Mammary epithelial cell (primary cell): ENCODE measurements at regions of chrX and their contacts with region 1.

Region 1: GRCh38 chrX:108070891-108071290 is 20.5 kb downstream of the PSMD10 start:
- DNase-seq: peak; percentile 89
- H3K4me3 ChIP-seq: no peak overlapping the region
- H3K27ac ChIP-seq: peak overlapping the region; percentile 39
- H3K4me1 ChIP-seq: peaks cover 24% of the 10 kb centered on the region
- H3K27me3 ChIP-seq: no peaks in the 10 kb centered on the region
- CTCF ChIP-seq: no peak

Region 2: DNA sequence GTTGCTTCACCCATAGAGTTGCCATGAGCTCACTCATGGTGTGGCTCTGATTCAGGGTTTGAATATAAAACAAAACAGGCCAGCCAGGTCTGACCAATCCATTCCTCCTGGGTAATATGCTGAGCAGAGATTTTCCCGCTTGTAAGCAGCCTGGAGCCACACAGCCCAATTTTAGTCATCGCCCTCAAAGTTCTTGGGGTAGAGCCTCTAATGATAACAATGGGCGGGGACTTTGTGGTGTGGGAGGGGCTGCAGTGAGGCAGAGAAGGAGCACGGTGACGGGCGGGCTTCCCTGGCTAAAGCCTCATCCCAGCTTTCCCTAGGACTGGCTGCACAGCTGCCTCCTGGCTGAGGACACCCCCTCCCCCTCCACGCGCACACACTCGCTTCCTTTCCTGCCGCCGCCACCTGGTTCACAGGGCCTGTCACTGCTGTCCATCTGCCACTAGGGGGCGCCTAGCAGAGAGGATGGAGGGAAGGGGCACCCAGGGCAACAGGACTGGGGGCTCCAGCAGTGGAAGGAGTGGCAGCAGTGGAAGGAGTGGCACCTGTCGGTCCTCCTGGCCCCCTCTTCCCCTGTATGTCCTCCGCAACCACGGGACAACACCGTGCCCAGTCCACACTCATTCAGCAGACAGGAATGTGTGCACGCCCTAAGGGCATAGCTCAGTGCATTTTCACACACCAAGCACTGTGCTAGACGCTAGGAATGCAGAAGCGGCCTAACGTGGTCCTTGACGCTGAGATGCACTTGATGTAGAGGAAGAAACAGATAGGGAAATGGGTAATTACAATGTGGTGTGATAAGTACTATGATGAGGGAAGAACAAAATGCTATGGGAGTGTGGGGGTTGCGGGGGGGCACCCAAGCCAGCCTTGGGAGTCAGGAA is 415.8 kb before region 1 on chrX:
- CTCF ChIA-PET with region 1: interaction called, 9 read pairs
- dilution Hi-C with region 1: no loop called
- in situ Hi-C with region 1: no loop called
- intact Hi-C with region 1: loop called (anchors 5 kb)
- DNase-seq: peak; percentile 91
- H3K4me3 ChIP-seq: no peak overlapping the region
- H3K27ac ChIP-seq: no peak overlapping the region
- H3K4me1 ChIP-seq: peaks cover 6% of the 10 kb centered on the region
- H3K27me3 ChIP-seq: no peaks in the 10 kb centered on the region
- CTCF ChIP-seq: peak; percentile 48 to 62

Region 3: GRCh38 chrX:107894038-107894437 is 176.9 kb before region 1 on chrX:
- CTCF ChIA-PET with region 1: no interaction called
- dilution Hi-C with region 1: no loop called
- in situ Hi-C with region 1: no loop called
- intact Hi-C with region 1: loop called (anchors 5 kb)
- DNase-seq: peak; percentile 57
- H3K4me3 ChIP-seq: no peak overlapping the region
- H3K27ac ChIP-seq: no peak overlapping the region
- H3K4me1 ChIP-seq: no peaks in the 10 kb centered on the region
- H3K27me3 ChIP-seq: no peaks in the 10 kb centered on the region
- CTCF ChIP-seq: peak; percentile 46 to 53

Region 4: GRCh38 chrX:107978707-107979307 is 92.1 kb before region 1 on chrX:
- CTCF ChIA-PET with region 1: no interaction called
- dilution Hi-C with region 1: no loop called
- in situ Hi-C with region 1: no loop called
- intact Hi-C with region 1: loop called (anchors 1 kb)
- DNase-seq: peak; percentile 12
- H3K4me3 ChIP-seq: no peak overlapping the region
- H3K27ac ChIP-seq: no peak overlapping the region
- H3K4me1 ChIP-seq: no peaks in the 10 kb centered on the region
- H3K27me3 ChIP-seq: no peaks in the 10 kb centered on the region
- CTCF ChIP-seq: peak; percentile 66 to 74

Region 5: DNA sequence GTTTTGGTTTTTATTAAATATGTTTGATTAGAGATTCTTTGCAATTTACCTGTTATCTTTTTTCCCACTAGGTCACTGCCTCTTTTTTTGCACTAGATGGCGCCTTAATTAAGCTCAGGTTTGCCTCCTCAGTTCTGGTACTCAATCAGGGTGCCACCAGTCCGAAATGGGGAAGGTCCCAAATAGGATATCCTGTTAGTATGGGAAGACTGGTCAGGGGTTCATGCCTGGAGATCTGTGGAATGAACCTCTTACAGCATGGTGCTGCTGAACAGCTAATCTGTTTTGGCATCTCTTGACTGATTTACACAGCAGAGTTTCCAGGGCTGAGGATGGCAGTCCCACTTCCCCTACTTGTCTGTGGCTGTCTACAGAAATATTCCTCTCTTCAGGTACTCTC is 50.3 kb before region 1 on chrX:
- CTCF ChIA-PET with region 1: no interaction called
- dilution Hi-C with region 1: no loop called
- in situ Hi-C with region 1: no loop called
- intact Hi-C with region 1: loop called (anchors 1 kb)
- DNase-seq: peak; percentile 23
- H3K4me3 ChIP-seq: no peak overlapping the region
- H3K27ac ChIP-seq: no peak overlapping the region
- H3K4me1 ChIP-seq: peaks cover 7% of the 10 kb centered on the region
- H3K27me3 ChIP-seq: peaks cover 3% of the 10 kb centered on the region
- CTCF ChIP-seq: peak; percentile 54 to 81

Region 6: DNA sequence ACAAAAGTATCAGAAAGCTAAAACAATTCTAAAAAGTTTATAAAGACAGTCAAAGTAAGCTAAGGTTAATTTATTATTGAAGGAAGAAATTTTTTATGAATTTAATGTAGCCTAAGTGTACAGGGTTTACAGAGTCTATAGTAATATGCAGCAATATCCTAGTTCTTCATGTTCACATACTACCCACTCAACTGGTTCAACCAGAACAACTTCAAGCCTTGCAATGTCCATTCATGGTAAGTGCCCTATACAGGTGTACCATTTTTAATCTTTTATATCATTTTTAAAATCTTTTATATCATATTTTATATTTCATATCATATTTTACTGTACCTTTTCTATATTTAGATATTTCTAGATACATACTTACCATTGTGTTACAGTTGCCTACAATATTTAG is 403.1 kb after region 1 on chrX:
- CTCF ChIA-PET with region 1: no interaction called
- dilution Hi-C with region 1: no loop called
- in situ Hi-C with region 1: no loop called
- intact Hi-C with region 1: no loop called
- DNase-seq: no peak
- H3K4me3 ChIP-seq: no peak overlapping the region
- H3K27ac ChIP-seq: no peak overlapping the region
- H3K4me1 ChIP-seq: no peaks in the 10 kb centered on the region
- H3K27me3 ChIP-seq: no peaks in the 10 kb centered on the region
- CTCF ChIP-seq: no peak